ENCODE measurements at regions of chr17 and their contacts with region 1.

Region 1: GRCh38 chr17:32142038-32142856 is at the start of gene RHOT1:
- DNase-seq: peak; percentile 76
- ATAC-seq: peak; percentile 80
- H3K4me3 Mint-ChIP-seq: peak within 1 kb of the TSS; percentile 98
- H3K27ac Mint-ChIP-seq: peak within 1 kb of the TSS; percentile 77
- H3K4me1 Mint-ChIP-seq: peaks cover 36% of the 10 kb centered on the region
- H3K27me3 Mint-ChIP-seq: no peaks in the 10 kb centered on the region
- total RNA-seq, gene RHOT1: 29.9 to 31.4 TPM

Region 2: DNA sequence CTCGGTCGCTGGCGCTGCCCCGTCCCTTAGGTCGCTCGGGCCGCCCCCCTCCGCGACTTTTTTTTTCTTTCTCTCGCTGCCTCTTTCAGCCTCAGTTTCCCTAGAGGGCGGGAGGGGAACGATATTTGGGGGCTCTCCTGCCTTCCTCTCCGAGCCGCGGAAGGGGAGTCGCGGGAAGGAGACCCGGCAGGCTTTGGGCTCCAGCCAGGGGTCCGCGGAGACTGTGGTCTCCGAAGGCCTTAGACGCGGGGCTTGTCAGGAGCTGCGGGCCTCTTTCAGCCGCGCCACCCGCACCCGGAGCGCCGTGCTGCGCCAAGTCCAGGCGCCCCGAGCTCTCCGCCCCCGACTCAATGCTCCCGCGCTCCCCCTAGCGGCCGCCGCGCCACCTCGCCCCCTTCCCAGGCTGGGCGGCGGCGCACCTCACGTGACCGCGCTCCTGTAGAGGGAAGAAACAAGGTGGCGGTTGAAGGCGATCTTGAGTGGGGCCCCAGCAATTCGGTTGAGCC is 135.2 kb before region 1 on chr17 and contains the start of gene LRRC37B:
- CTCF ChIA-PET with region 1: interaction called, 110 read pairs
- POLR2A ChIA-PET with region 1: interaction called, 14 read pairs
- DNase-seq: peak; percentile 90
- ATAC-seq: peak; percentile 94
- H3K4me3 Mint-ChIP-seq: peak within 1 kb of the TSS; percentile 87
- H3K27ac Mint-ChIP-seq: peak within 1 kb of the TSS; percentile 88
- H3K4me1 Mint-ChIP-seq: peaks cover 28% of the 10 kb centered on the region
- H3K27me3 Mint-ChIP-seq: no peaks in the 10 kb centered on the region
- total RNA-seq, gene LRRC37B: 32.9 to 37.4 TPM

Region 3: GRCh38 chr17:32103476-32104113 is 38.7 kb before region 1 on chr17:
- CTCF ChIA-PET with region 1: interaction called, 12 read pairs
- POLR2A ChIA-PET with region 1: no interaction called
- DNase-seq: peak; percentile 17
- ATAC-seq: no peak
- H3K4me3 Mint-ChIP-seq: peak overlapping the region; percentile 31
- H3K27ac Mint-ChIP-seq: peak overlapping the region; percentile 92
- H3K4me1 Mint-ChIP-seq: peaks cover 48% of the 10 kb centered on the region
- H3K27me3 Mint-ChIP-seq: no peaks in the 10 kb centered on the region

Region 4: DNA sequence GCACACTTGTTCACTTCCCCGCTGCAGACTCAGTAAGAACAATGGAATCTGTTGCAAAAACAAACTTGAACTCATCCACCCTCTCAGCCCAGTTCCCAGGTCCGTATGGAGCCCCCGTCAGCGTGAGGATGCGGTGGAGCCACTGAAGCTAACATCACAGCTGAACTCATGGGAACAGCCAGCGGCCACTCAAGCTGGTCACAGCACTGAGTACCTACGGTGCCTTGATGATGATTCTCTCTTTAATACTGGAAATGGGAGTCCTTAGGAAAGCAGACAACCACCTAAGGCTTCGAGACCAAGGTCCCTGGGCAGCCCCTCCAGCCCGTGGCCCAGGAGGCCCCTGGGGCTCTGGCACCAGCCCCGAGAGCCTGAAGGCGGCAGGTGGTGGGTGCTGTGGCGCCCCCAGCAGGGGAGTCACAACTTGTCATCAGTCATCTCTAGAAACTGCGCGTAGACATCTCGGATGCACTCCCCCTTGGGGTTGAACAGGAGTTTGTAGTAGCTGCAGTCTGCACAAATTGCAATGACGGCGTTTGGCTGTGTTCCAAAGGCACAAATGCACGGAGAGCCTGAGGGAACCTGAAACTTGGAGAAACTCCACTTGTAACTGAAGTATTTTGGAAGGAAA is 31.0 kb before region 1 on chr17:
- CTCF ChIA-PET with region 1: interaction called, 10 read pairs
- POLR2A ChIA-PET with region 1: no interaction called
- DNase-seq: peak; percentile 62
- ATAC-seq: peak; percentile 65
- H3K4me3 Mint-ChIP-seq: no peak overlapping the region
- H3K27ac Mint-ChIP-seq: no peak overlapping the region
- H3K4me1 Mint-ChIP-seq: peaks cover 32% of the 10 kb centered on the region
- H3K27me3 Mint-ChIP-seq: peaks cover 2% of the 10 kb centered on the region

Region 5: GRCh38 chr17:32127158-32127897 is 14.9 kb before region 1 on chr17:
- CTCF ChIA-PET with region 1: interaction called, 85 read pairs
- POLR2A ChIA-PET with region 1: interaction called, 6 read pairs
- DNase-seq: peak; percentile 93
- ATAC-seq: peak; percentile 100
- H3K4me3 Mint-ChIP-seq: peak overlapping the region; percentile 88
- H3K27ac Mint-ChIP-seq: peak overlapping the region; percentile 93
- H3K4me1 Mint-ChIP-seq: peaks cover 33% of the 10 kb centered on the region
- H3K27me3 Mint-ChIP-seq: no peaks in the 10 kb centered on the region